Gastrocnemius medialis (tissue), 4 donors: ENCODE measurements at regions of chr3 and their contacts with region 1.

Region 1: GRCh38 chr3:98602078-98602678 is 8.8 kb upstream of the CPOX start:
- DNase-seq: no peak
- ATAC-seq: peak; percentile 51 to 56
- H3K4me3 ChIP-seq: no peak overlapping the region
- H3K27ac ChIP-seq: no peak overlapping the region
- H3K4me1 ChIP-seq: no peaks in the 10 kb centered on the region
- H3K27me3 ChIP-seq: no peaks in the 10 kb centered on the region
- CTCF ChIP-seq: peak; percentile 29 to 70 (median 55)
- POLR2A ChIP-seq: no peak

Region 2: GRCh38 chr3:98705706-98706105 is 103.5 kb after region 1 on chr3:
- in situ Hi-C with region 1: loop called in 1 of 4 experiments (anchors 25 kb)
- intact Hi-C with region 1: no loop called
- DNase-seq: no peak
- ATAC-seq: no peak
- H3K4me3 ChIP-seq: no peak overlapping the region
- H3K27ac ChIP-seq: no peak overlapping the region
- H3K4me1 ChIP-seq: no peaks in the 10 kb centered on the region
- H3K27me3 ChIP-seq: no peaks in the 10 kb centered on the region
- CTCF ChIP-seq: no peak
- POLR2A ChIP-seq: no peak

Region 3: GRCh38 chr3:98798820-98799219 is 196.6 kb after region 1 on chr3:
- in situ Hi-C with region 1: no loop called
- intact Hi-C with region 1: loop called (anchors 5 kb)
- DNase-seq: no peak
- ATAC-seq: no peak
- H3K4me3 ChIP-seq: no peak overlapping the region
- H3K27ac ChIP-seq: no peak overlapping the region
- H3K4me1 ChIP-seq: no peaks in the 10 kb centered on the region
- H3K27me3 ChIP-seq: no peaks in the 10 kb centered on the region
- CTCF ChIP-seq: peak in 3 of 5 experiments; percentile 9 to 43 (median 19)
- POLR2A ChIP-seq: no peak

Region 4: GRCh38 chr3:98994128-98994762 is 392.1 kb after region 1 on chr3:
- in situ Hi-C with region 1: loop called in 1 of 4 experiments (anchors 10 kb)
- intact Hi-C with region 1: no loop called
- DNase-seq: no peak
- ATAC-seq: peak in 1 of 2 donors; percentile 65
- H3K4me3 ChIP-seq: no peak overlapping the region
- H3K27ac ChIP-seq: no peak overlapping the region
- H3K4me1 ChIP-seq: no peaks in the 10 kb centered on the region
- H3K27me3 ChIP-seq: no peaks in the 10 kb centered on the region
- CTCF ChIP-seq: peak; percentile 10 to 62 (median 54)
- POLR2A ChIP-seq: no peak